ENCODE measurements at regions of chr11 and their contacts with region 1.

Region 1: GRCh38 chr11:61332797-61333549 is at the starts of genes DDB1 and TKFC:
- DNase-seq: peak; percentile 97
- H3K4me3 ChIP-seq: peak within 1 kb of the TSS; percentile 85 to 91
- H3K27ac ChIP-seq: peak within 1 kb of the TSS; percentile 82 to 95
- H3K4me1 ChIP-seq: peaks cover 56% of the 10 kb centered on the region
- H3K27me3 ChIP-seq: no peaks in the 10 kb centered on the region
- CTCF ChIP-seq: peak in 1 of 3 experiments; percentile 2
- POLR2A ChIP-seq: peak; percentile 57
- total RNA-seq, gene DDB1: 266 to 333 TPM
- total RNA-seq, gene TKFC: 90.1 to 121 TPM

Region 2: DNA sequence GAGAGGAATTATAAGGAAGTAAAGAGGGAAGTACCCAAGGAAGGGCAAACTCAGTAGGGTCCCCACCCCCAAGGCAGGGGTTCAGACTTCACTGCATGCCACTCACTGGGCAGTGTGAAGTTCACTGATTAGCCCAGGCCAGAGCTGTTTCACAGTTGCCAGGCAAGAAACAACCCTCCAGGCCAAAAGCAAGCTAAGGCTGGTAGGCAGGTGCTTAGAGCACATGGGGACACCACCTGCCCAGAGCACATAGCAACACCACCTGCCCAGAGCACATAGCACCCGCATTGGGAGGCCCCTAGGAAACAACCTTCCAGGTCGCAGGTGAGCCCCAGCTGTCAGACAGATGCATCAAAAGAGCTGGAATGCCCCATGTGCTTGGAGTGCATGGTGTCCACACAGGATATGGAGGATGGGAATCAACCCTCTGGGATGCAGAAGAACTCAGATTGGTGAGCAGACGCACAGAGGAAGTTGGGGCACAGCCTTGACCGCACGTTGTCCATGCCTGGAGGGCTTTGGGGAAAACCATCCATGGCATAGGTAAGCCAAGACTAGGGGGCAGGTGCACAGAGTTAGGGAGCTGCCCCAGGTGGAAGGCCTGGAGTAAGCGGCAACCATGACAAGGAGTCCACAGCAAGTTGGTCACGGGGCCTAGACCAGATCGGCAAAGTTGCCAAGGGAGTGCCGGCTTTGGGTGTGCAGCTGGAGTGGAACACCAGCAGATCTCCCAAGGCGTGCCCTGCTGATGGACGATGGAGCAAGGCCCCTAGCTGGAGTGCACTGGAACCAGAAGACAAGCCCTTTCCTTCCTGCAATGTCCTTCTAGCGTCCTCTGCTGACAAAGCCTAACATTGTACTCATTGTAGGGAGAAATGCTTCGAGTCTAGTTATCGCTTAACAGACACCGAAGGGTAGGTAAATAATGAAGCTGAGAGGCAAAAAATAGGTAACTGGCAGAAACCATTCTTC is 51.6 kb after region 1 on chr11:
- intact Hi-C with region 1: loop called (anchors 5 kb)
- DNase-seq: peak; percentile 42
- H3K4me3 ChIP-seq: no peak overlapping the region
- H3K27ac ChIP-seq: no peak overlapping the region
- H3K4me1 ChIP-seq: no peaks in the 10 kb centered on the region
- H3K27me3 ChIP-seq: no peaks in the 10 kb centered on the region
- CTCF ChIP-seq: peak in 2 of 3 experiments; percentile 14 to 20
- POLR2A ChIP-seq: no peak

Region 3: DNA sequence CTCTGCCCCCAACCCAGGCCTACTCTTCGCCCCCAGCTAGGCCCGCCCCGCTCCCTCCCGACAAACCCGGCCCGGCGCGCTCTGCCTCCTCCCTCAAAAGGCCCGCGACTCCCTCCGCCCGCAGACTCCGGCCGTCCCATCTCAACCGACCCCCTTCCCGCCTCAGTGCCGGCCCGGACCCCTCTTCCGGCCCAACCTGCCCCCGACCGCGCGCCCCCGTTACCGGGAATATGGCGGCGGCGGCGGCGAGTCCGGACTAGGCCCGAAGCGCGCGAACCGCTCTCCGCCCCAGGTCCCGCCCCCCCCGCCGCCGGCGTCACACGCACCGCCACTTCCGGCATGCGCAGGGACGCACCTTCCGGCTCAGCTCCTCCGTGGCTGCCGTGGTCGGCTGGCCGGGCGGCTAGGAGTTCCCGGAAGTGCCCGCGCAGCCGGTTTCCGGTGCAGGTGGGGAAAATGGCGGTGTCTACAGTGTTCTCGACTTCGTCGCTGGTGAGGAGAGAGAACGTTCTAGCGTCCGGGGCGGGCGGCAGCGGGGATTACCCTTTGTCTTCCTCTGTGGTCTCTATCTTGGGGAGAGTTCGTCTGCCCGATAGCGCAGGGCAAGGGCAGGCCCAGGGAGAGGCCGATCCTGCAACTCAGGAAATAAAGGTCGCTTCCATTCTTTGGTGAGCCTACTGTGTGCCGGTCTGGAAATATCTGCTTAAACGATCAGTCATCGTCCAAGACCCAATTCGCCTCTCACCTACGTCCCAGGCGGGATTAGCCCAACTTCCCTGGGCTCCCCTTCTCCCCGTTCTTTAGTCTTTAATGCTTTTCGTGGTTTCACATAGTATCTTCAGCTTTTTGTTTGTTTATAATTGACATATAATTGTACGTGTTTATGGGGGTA is 97.0 kb after region 1 on chr11 and contains the starts of genes CPSF7 and SDHAF2:
- intact Hi-C with region 1: loop called (anchors 10 kb)
- DNase-seq: peak; percentile 98
- H3K4me3 ChIP-seq: peak within 1 kb of the TSS; percentile 92 to 98
- H3K27ac ChIP-seq: peak within 1 kb of the TSS; percentile 98
- H3K4me1 ChIP-seq: peaks cover 29% of the 10 kb centered on the region
- H3K27me3 ChIP-seq: no peaks in the 10 kb centered on the region
- CTCF ChIP-seq: no peak
- POLR2A ChIP-seq: peak; percentile 63
- total RNA-seq, gene CPSF7: 84.2 to 86.5 TPM
- total RNA-seq, gene SDHAF2: 66.2 to 85.4 TPM

Measured in testis (tissue), 5 donors.